ENCODE measurements at regions of chr4 and their contacts with region 1.

Region 1: DNA sequence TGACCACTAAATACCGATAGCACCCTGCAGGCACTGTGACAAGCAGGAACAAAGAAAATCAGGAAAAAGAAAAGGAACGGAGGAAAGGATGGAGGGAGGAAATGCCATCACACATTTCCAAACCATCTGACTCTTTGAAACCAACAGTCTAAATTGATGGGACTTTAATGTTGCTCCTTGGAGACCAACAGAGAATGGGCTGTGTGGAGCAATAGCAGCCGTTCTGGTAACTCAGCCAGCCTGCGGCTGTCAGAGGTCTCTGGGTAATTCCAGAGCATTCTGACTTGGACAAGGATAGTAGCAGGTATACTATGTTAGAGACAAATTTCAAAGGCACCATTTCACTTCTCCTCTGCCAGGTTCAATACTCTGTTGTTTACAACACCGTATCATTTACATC is 18.0 kb downstream of the PARM1 start:
- DNase-seq: no peak
- ATAC-seq: no peak
- H3K4me3 ChIP-seq: no peak overlapping the region
- H3K27ac ChIP-seq: no peak overlapping the region
- H3K4me1 ChIP-seq: no peaks in the 10 kb centered on the region
- H3K27me3 ChIP-seq: no peaks in the 10 kb centered on the region
- CTCF ChIP-seq: no peak

Region 2: GRCh38 chr4:74932816-74933561 is 17.9 kb before region 1 on chr4 and contains the start of gene PARM1:
- CTCF ChIA-PET with region 1: no interaction called
- POLR2A ChIA-PET with region 1: no interaction called
- in situ Hi-C with region 1: no loop called
- intact Hi-C with region 1: loop called (anchors 1 kb)
- DNase-seq: peak; percentile 17
- ATAC-seq: peak; percentile 87
- H3K4me3 ChIP-seq: peak within 1 kb of the TSS; percentile 26 to 52
- H3K27ac ChIP-seq: no peak within 1 kb of the TSS
- H3K4me1 ChIP-seq: no peaks in the 10 kb centered on the region; the same call in 1 of the 2 replicates
- H3K27me3 ChIP-seq: peaks cover 15% of the 10 kb centered on the region
- CTCF ChIP-seq: peak; percentile 75
- total RNA-seq, gene PARM1: 0.21 TPM

Measured in Panc1 (cell line).